HEK293 (cell line): ENCODE measurements at regions of chr20 and their contacts with region 1.

Region 1: DNA sequence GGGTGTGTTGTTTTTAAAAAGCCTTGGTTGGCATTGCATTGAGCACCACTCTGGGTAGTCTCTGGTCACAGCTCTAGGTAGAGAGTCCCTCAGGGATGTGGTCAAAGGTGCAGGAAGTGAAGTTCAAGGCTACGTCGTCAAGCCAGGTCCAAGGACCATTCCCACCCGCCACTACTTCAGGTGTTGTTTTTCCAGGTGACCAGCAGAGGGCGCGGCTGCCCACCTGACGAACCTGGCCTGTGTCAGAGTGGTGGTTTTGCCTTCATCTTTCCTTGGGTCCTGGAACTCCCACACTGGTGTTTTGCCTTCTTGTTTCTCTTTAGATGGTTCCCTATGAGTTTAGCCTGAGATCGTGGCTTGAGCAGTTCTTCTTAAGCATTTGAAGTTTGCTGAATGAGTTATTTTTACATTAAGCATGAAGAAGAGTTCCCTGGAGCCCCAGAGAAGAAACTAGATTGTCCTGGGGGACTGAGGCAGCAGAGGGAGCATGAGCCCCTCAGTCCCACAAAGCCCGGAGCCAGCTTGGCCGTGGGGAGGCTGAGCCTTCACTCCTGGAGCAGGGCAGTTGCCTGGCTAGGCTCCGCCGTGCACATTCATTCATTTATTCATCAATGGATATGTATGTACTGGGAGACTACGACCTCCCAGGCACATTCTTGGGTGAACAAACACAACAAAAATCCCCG is 5.6 kb upstream of the PHACTR3 start:
- H3K4me3 ChIP-seq: no peak overlapping the region
- H3K27ac ChIP-seq: no peak overlapping the region
- H3K4me1 ChIP-seq: no peaks in the 10 kb centered on the region
- CTCF ChIP-seq: peak; percentile 63

Region 2: GRCh38 chr20:59588236-59588855 is 10.4 kb before region 1 on chr20:
- CTCF ChIA-PET with region 1: interaction called, 17 read pairs
- POLR2A ChIA-PET with region 1: no interaction called
- H3K4me3 ChIP-seq: no peak overlapping the region
- H3K27ac ChIP-seq: no peak overlapping the region
- H3K4me1 ChIP-seq: no peaks in the 10 kb centered on the region
- CTCF ChIP-seq: no peak

Region 3: DNA sequence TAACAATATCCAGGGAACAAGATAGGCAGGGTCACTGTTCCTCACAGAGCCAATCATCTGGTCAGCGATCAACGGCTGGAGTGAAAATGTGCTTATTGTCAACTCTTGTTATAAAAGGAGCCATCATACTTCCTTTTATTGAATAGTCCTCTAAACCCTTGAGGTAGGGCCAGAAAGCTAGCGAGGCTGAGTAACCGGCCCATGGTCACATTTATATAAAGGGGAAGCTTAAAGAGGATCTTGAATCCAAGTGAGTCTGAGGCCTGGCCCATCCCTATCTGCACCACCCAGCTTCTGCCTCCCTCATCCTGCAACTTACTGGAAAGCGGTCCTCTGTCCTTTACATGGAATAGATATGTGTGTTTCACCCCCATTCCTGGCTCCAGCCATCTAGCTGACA is 15.1 kb after region 1 on chr20:
- CTCF ChIA-PET with region 1: interaction called, 10 read pairs
- POLR2A ChIA-PET with region 1: no interaction called
- H3K4me3 ChIP-seq: no peak overlapping the region
- H3K27ac ChIP-seq: no peak overlapping the region
- H3K4me1 ChIP-seq: no peaks in the 10 kb centered on the region
- CTCF ChIP-seq: no peak

Region 4: GRCh38 chr20:59751056-59751688 is 152.4 kb after region 1 on chr20:
- CTCF ChIA-PET with region 1: interaction called, 53 read pairs
- POLR2A ChIA-PET with region 1: no interaction called
- H3K4me3 ChIP-seq: no peak overlapping the region
- H3K27ac ChIP-seq: no peak overlapping the region
- H3K4me1 ChIP-seq: no peaks in the 10 kb centered on the region
- CTCF ChIP-seq: peak; percentile 78